ENCODE measurements at regions of chr1 and their contacts with region 1.

Region 1: DNA sequence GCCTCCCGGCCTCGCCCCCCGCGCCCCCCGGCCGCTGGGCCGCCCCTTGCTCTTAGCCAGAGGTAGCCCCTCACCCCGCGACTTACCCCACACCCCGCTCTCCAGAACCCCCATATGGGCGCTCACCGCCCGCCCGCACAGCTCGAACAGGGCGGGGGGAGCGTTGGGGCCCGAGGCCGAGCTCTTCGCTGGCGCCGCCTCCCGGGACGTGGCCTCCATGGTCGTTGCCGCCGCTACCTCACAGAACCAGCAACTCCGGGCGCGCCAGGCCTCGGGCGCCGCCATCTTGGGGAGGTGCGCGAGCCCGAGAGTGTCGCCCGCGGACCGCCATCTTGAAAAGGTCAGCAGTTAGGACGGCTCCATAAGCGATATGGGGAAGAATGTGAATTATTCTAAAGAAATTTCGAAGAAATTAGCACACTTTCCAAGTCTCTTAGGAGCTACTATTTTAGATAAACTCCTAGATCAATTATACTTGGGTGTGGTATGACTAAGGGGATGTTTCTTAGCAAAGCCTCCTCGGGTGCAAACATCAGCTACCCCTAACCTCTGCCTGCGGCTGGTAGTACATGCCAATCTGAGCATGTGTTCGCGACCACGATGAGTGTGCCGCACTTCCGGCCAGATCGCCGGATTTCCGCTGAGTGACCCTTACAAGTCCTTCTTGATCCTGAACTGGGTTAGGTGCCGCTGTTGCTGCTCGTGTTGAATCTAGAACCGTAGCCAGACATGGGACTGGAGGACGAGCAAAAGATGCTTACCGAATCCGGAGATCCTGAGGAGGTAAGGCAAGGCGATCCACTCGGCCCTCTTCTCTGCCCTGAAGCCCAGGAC is at the starts of genes LRRC41 and UQCRH:
- DNase-seq: peak; percentile 96
- H3K4me3 Mint-ChIP-seq: peak within 1 kb of the TSS; percentile 99
- H3K27ac Mint-ChIP-seq: peak within 1 kb of the TSS; percentile 100
- H3K4me1 Mint-ChIP-seq: peaks cover 39% of the 10 kb centered on the region
- H3K27me3 Mint-ChIP-seq: no peaks in the 10 kb centered on the region
- CTCF ChIP-seq: no peak
- total RNA-seq, gene LRRC41: 92.6 and 105 TPM in 2 replicates
- total RNA-seq, gene UQCRH: 299 and 318 TPM in 2 replicates

Region 2: DNA sequence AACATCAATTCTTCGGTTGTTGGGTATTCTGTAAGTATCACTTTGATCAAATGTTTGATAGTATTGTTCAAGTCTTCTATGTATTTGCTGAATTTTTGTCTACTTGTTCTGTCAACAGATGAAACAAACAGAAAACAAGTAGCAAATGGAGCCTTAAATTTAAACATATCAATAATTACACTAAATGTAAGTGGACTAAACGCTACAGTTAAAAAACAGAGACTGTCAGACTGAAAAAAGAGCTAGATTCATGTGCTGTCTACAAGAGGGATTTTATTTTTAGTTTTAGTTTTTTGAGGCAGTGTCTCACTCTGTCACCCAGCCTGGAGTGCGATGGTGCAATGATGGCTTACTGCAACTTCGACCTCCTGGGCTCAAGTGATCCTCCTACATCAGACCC is 66.4 kb before region 1 on chr1:
- CTCF ChIA-PET with region 1: no interaction called
- POLR2A ChIA-PET with region 1: no interaction called
- intact Hi-C with region 1: no loop called
- DNase-seq: no peak
- H3K4me3 Mint-ChIP-seq: no peak overlapping the region
- H3K27ac Mint-ChIP-seq: no peak overlapping the region
- H3K4me1 Mint-ChIP-seq: no peaks in the 10 kb centered on the region
- H3K27me3 Mint-ChIP-seq: no peaks in the 10 kb centered on the region
- CTCF ChIP-seq: no peak

Region 3: GRCh38 chr1:46247436-46248121 is 55.7 kb before region 1 on chr1 and contains the start of gene RAD54L:
- CTCF ChIA-PET with region 1: interaction called, 4 read pairs
- POLR2A ChIA-PET with region 1: interaction called, 39 read pairs
- intact Hi-C with region 1: no loop called
- DNase-seq: peak; percentile 99
- H3K4me3 Mint-ChIP-seq: peak within 1 kb of the TSS; percentile 81
- H3K27ac Mint-ChIP-seq: peak within 1 kb of the TSS; percentile 91
- H3K4me1 Mint-ChIP-seq: peaks cover 33% of the 10 kb centered on the region
- H3K27me3 Mint-ChIP-seq: no peaks in the 10 kb centered on the region
- CTCF ChIP-seq: no peak
- total RNA-seq, gene RAD54L: 4.5 and 5.0 TPM in 2 replicates

Region 4: DNA sequence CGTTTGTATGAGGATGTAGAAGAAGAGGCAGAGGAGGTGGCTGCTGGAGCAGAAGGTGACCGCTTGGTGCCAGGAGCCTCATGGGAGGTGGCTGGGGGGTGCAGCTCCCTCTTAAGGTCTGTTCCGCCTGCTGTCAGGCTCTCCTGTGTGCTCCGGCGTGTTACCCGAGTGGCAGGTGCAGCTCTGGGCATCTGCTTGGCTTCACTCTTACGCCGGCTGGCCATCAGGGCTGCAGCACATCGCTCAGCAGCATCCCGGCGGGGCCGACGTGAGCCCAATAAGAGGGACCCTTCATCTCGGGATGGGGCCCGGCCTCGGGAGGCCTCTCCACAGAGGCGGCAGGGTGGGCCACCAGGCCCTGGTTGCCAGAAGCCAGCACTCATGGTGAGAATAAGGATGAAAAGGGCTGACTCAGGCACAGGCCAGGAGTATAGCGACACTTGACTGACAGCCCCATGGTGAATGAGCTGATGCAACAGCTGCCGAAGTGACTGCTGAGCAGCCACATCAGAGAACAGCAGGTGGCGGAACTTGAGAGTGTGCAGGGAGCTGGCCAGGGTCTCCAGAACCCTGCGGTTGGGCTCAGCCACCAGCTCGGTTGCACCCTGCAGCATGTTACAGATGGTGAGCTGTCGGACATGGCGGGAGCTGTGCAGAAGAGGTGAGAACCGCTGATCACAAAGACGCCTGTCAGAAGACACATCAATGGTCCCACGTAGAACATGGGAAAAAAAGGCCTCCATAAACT is 17.4 kb before region 1 on chr1:
- CTCF ChIA-PET with region 1: no interaction called
- POLR2A ChIA-PET with region 1: interaction called, 19 read pairs
- intact Hi-C with region 1: no loop called
- DNase-seq: no peak
- H3K4me3 Mint-ChIP-seq: no peak overlapping the region
- H3K27ac Mint-ChIP-seq: no peak overlapping the region
- H3K4me1 Mint-ChIP-seq: no peaks in the 10 kb centered on the region
- H3K27me3 Mint-ChIP-seq: no peaks in the 10 kb centered on the region
- CTCF ChIP-seq: no peak

Region 5: GRCh38 chr1:46315669-46316403 is 12.6 kb after region 1 on chr1:
- CTCF ChIA-PET with region 1: no interaction called
- POLR2A ChIA-PET with region 1: interaction called, 12 read pairs
- intact Hi-C with region 1: no loop called
- DNase-seq: no peak
- H3K4me3 Mint-ChIP-seq: no peak overlapping the region
- H3K27ac Mint-ChIP-seq: no peak overlapping the region
- H3K4me1 Mint-ChIP-seq: peaks cover 5% of the 10 kb centered on the region
- H3K27me3 Mint-ChIP-seq: no peaks in the 10 kb centered on the region
- CTCF ChIP-seq: no peak

Region 6: DNA sequence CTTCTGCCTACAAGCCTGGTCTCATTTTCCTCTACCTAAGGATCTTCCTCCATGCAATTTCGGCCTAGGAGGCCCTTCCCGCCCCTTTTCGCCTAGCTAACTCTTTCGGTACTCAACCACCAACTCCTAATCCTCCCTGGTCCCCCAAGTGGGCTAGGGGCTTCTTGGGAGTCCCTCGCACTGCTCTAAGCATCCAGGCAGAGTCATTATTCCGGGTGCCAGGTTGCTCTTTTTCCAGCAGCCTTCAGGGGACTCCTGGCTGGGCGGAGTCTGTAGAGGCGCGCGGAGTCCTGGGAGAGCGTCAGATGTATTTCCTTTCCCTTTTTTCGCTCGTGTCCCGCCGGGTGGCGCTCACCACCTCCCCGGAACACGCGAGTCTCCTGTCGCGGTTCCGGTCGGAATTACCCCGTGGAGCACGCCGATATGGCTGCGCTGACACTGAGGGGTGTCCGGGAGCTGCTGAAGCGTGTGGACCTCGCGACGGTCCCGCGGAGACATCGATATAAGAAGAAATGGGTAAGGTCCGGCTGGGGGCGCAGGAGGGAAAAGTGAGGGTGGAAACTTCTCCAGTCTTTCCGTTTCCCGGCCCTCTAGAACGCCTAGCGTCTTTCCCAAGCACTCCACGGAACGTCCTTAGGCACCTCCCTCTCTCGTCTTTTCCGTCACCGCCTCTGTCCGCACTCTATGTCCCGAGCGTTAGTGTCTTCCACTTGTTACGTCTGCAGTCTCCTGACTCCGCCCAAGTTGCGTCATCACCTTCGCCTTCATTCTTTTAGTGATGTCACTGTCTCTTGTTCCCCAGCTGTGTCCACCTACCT is 37.4 kb after region 1 on chr1 and contains the start of gene NSUN4:
- CTCF ChIA-PET with region 1: interaction called, 12 read pairs
- POLR2A ChIA-PET with region 1: interaction called, 119 read pairs
- intact Hi-C with region 1: loop called (anchors 1 kb)
- DNase-seq: peak; percentile 92
- H3K4me3 Mint-ChIP-seq: peak within 1 kb of the TSS; percentile 96
- H3K27ac Mint-ChIP-seq: peak within 1 kb of the TSS; percentile 99
- H3K4me1 Mint-ChIP-seq: peaks cover 26% of the 10 kb centered on the region
- H3K27me3 Mint-ChIP-seq: no peaks in the 10 kb centered on the region
- CTCF ChIP-seq: peak; percentile 75
- total RNA-seq, gene NSUN4: 27.4 and 28.4 TPM in 2 replicates

Region 7: GRCh38 chr1:46401964-46402626 is 98.8 kb after region 1 on chr1:
- CTCF ChIA-PET with region 1: interaction called, 3 read pairs
- POLR2A ChIA-PET with region 1: interaction called, 11 read pairs
- intact Hi-C with region 1: no loop called
- DNase-seq: peak; percentile 97
- H3K4me3 Mint-ChIP-seq: peak overlapping the region; percentile 23
- H3K27ac Mint-ChIP-seq: no peak overlapping the region
- H3K4me1 Mint-ChIP-seq: peaks cover 7% of the 10 kb centered on the region
- H3K27me3 Mint-ChIP-seq: no peaks in the 10 kb centered on the region
- CTCF ChIP-seq: no peak

Measured in MCF 10A (cell line).